Sciatic nerve (tissue), 2 donors: ENCODE measurements at regions of chr4 and their contacts with region 1.

Region 1: DNA sequence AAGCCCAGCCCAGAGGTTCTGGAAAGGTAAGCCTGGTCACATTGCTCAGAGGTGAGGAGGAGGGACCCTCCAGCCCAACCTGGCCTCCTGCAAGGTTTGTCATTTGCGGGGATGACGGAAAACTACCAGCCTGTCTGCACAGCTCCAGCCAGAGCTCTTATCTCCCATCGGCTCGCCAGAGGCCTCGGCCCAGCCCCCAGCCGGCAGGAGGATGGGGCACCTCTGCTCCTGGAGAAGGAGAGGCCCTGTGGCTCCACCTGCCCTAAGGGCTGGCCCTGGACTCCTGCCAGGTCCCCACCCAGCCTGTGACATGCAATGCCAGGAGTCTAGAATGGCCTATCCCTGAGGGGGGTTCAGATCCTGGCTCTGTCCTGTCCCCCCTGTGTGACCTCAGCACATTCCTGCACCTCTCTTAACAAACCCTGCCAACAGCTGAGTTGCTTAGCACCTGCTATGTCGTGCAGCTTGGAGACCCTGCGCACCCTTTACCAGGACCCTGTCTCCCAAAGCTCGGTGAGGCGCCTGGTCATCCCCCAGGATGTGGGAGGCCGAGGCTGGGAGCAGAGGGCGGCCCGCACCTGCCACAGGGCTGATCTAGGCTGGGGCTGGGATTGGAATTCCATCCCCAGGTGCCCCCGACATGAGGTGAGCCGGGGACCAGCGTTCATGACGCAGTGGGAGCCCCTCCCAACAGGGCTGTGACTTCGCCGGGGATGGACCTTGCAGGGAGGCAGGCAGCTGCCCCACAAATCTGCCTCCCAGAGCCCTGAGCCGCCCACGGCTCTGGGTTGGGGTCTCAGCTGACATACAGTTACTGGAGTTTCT is 14.4 kb downstream of the ADRA2C start:
- DNase-seq: no peak
- ATAC-seq: no peak

Region 2: GRCh38 chr4:3747581-3747904 is 33.0 kb before region 1 on chr4:
- intact Hi-C with region 1: loop called (anchors 1 kb)
- DNase-seq: no peak
- ATAC-seq: no peak

Region 3: GRCh38 chr4:3826247-3827172 is 46.0 kb after region 1 on chr4:
- intact Hi-C with region 1: loop called (anchors 1 kb)
- DNase-seq: no peak
- ATAC-seq: no peak

Region 4: DNA sequence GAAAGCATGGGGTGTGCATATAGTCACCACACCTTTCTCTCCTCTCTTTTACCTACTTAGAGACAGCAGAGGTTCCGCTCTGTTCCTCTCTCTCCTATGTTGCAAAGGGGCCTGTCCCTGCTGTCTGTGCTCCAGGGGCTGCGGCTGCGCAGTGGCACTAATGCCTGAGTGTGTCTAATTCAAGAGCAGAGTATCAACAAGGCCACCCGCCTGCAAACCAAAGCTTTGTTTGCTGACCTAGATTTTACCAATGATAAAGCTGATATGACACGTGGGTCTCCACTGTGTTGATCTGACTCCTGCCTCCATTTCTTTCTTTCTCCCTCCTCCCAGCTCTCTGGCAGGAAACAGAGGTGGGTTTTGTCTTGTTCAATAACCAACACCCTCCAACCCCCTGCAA is 681.3 kb after region 1 on chr4:
- intact Hi-C with region 1: no loop called
- DNase-seq: no peak
- ATAC-seq: no peak